K562 (cell line): ENCODE measurements at regions of chr2 and their contacts with region 1.

Region 1: DNA sequence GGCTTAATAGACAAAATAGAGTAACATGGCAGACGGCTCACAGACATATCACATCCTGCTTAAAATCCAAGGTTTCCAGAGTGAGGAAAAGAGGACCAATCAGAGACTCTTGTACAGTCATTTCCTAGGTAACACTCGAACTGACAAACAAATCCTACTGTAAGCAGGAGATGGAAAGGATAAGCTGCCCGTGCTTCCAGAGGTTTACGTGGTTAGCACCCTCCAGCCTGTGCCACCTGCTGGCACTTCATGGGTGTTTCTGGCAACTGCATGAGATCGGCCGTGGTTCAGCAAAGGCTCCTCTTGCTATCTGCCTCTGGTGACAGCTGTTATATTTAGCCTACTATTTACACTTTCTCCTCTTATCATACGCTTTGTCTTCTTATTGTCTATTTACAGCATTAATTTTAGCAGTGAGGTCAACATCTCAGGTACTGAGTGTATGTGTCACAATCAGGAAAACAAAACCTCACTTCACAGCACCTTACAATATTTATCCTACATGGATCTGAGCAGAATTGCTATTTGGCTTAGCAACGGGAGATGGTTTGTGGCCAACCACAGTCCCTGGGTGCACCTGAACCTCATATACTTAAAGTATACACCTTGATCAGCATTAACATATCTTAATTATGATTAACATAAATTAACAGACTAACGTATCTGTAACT is 226.9 kb downstream of the TMEM163 start:
- DNase-seq: no peak
- ATAC-seq: no peak
- H3K4me3 ChIP-seq: no peak overlapping the region
- H3K27ac ChIP-seq: no peak overlapping the region
- H3K4me1 ChIP-seq: no peaks in the 10 kb centered on the region
- H3K27me3 ChIP-seq: peaks cover 20 to 33% of the 10 kb centered on the region in 2 experiments; a peak in 4 of 5 replicates
- CTCF ChIP-seq: no peak
- EP300 ChIP-seq: no peak
- POLR2A ChIP-seq: no peak
- RAD21 ChIP-seq: no peak

Region 2: DNA sequence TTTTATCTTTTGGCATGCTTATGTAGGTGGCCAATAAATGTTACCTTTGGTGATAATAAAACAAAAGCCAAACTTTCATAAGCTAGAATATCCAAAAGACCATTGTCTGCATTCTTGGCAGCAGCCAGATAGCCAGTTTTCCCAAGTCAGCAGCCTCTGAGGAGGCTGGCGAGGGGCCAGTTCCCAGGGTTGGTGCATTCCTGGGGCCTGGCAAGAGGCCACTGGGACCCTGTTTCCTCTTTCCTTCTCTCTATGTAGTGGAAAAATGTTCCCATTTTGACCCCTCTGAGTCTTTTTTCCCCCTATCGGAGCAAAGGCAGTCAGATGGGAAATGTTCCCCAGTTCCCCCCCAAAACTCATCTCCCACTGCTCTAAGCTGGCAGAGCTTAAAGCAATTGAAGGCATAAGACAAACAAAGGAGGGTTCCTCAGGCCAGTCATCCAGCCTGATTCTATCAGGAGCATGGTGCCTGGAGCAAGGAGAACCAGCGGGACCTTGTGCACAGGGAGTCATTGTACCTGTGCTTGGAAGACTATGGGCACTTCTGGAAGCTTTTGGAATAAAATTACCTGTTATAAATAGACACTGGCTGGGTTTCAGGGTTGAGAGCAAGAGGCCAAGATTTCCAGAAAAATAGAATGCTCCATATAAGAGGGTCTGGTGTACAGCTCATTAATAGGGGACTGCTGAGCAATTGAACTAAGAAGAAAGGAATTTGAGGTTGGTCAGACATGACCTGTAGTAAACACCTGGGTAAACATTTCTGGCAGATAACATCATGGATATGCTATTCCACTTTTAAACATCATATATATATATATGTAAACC is 987.1 kb before region 1 on chr2:
- CTCF ChIA-PET with region 1: no interaction called
- POLR2A ChIA-PET with region 1: no interaction called
- in situ Hi-C with region 1: loop called (anchors 10 kb)
- intact Hi-C with region 1: no loop called
- DNase-seq: no peak
- ATAC-seq: no peak
- H3K4me3 ChIP-seq: no peak overlapping the region
- H3K27ac ChIP-seq: no peak overlapping the region
- H3K4me1 ChIP-seq: no peaks in the 10 kb centered on the region
- H3K27me3 ChIP-seq: no peaks in the 10 kb centered on the region
- CTCF ChIP-seq: no peak
- EP300 ChIP-seq: no peak
- POLR2A ChIP-seq: no peak
- RAD21 ChIP-seq: no peak